ENCODE measurements at regions of chr20 and their contacts with region 1.

Region 1: DNA sequence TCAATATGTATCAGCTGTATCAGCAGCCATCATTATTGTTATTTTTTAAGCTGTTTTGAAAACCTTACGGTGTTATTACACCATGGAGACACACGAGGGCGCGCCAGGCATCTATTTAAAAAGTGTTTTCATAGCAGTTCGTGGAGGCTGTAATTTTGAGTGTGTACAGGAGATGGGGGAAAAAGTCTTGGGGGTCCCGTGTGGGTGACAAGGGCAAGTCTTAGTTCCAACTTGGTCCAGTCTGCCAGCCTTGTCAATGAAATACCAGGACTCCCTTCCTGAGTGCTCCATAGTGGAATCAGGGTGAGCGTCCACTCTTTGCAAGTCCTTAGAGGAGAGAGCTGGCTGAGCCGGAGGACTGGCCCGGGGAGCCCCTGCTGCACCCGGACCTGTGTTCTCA is 43.3 kb downstream of the SLC2A10 start:
- DNase-seq: peak; percentile 80
- H3K4me3 Mint-ChIP-seq: peak overlapping the region; percentile 0
- H3K27ac Mint-ChIP-seq: no peak overlapping the region
- H3K4me1 Mint-ChIP-seq: peaks cover 12% of the 10 kb centered on the region
- H3K27me3 Mint-ChIP-seq: no peaks in the 10 kb centered on the region
- CTCF ChIP-seq: peak; percentile 82

Region 2: DNA sequence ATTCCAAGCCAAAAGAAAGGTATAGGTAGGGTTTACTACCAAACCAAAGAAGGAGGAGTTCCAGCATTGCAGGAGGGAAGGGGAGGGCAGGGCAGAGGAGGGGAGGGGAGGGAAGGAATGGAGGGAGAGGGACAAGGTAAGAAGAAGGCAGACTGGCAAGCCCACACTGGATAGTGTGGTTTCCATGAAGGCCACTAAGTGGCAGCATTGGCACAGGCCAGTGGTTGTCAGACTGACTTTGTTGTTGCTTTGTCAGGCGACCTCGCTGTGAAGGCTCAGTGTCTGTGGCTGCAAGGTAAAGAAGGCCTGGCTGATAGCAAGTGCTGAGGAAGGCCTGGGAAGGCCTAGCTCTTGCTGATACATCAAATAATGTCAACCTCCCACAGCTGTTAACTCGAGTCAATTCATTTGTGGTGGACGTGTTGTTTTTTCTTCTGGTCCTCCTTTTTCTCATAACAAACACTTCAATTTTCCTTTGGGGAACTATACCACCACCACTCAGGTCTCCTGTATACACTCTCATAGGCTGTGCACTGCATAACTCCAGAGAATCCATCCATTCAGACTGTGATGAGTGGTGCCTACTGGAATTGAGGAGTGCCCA is 231.7 kb before region 1 on chr20:
- CTCF ChIA-PET with region 1: no interaction called
- intact Hi-C with region 1: no loop called
- DNase-seq: peak; percentile 79
- H3K4me3 Mint-ChIP-seq: no peak overlapping the region
- H3K27ac Mint-ChIP-seq: no peak overlapping the region
- H3K4me1 Mint-ChIP-seq: no peaks in the 10 kb centered on the region
- H3K27me3 Mint-ChIP-seq: peaks cover 59% of the 10 kb centered on the region
- CTCF ChIP-seq: peak; percentile 86

Region 3: GRCh38 chr20:46739431-46740129 is 13.1 kb before region 1 on chr20:
- CTCF ChIA-PET with region 1: interaction called, 14 read pairs
- intact Hi-C with region 1: no loop called
- DNase-seq: peak; percentile 78
- H3K4me3 Mint-ChIP-seq: peak overlapping the region; percentile 44
- H3K27ac Mint-ChIP-seq: peak overlapping the region; percentile 90
- H3K4me1 Mint-ChIP-seq: peaks cover 59% of the 10 kb centered on the region
- H3K27me3 Mint-ChIP-seq: no peaks in the 10 kb centered on the region
- CTCF ChIP-seq: no peak

Region 4: DNA sequence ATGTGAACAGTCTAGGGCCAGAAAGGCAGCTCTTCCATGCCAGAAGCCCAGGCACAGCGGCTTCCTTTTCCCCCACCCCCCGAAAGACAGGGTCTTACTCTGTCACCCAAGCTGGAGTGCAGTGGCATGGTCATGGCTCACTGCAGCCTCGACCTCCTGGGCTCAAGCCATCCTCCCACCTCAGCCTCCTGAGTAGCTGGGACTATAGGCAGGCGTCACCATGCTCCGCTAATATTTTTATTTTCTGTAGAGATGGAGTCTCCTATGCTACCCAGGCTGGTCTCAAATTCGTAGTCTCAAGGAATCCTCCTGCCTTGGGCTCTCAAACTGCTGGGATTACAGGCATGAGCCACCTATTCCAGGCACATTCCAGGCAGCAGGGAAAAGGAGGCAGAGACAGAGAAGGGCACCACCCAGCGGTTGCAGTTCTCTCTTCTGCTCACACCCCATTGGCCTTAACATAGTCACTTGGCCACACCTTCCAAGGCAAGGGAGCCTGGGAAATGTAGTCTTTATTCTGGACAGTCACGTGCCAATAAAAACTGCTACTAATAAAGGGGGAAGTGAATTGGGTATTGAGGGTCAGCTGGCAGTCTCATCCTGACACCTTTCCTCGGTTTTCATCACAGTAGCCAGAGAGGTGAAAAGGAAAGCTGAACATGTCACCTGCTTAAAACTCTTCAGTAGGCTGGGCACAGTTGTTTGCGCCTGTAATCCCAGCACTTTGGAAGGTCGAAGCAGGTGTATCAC is 397.9 kb after region 1 on chr20:
- CTCF ChIA-PET with region 1: interaction called, 9 read pairs
- intact Hi-C with region 1: loop called (anchors 1 kb)
- DNase-seq: peak; percentile 86
- H3K4me3 Mint-ChIP-seq: no peak overlapping the region
- H3K27ac Mint-ChIP-seq: no peak overlapping the region
- H3K4me1 Mint-ChIP-seq: peaks cover 45% of the 10 kb centered on the region
- H3K27me3 Mint-ChIP-seq: peaks cover 14% of the 10 kb centered on the region
- CTCF ChIP-seq: peak; percentile 61

Region 5: DNA sequence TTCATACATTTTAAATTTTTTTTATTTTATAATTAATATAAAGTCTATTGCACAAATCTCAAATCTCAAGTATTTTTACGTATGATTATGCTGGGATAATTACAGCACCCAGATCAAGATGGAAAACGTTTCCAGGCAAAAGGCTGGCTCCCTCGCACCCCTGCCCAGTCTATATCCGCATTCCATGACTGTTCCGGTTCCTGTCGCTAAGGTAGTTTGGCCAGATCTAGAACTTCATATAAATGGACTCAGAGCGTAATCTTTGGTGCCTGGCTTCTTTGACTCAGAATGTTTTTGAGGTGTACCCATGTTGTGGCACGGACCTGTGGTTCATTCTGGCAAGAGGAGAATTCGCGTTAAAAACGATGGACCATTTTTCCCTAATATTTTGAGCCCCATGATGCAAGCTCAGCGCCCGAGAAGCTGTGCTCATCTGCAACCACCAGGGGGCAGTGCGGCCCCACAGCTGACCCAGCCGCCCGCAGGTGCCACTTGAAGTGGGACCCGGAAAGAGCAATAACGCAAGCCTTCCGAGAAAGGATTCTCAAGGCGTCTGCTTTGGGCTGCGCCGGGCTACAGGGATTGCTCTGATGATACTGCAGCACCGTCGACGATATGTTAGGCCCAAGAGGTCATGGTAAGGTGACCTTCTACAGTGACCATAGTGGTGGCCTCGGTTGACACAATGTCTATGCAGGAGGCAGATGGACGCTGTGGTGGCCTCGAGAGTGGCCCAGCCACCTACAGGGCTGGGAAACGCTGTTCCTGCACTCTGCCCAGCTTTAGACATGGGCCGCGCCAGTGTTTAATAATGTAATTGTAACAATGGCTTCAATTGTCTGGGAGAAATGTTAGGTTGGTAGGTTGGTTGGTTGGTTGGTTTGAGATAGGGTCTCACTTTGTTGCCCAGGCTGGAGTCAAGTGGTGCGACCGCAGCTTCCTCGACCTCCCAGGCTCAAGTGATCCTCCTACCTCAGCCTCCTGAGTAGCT is 443.7 kb after region 1 on chr20:
- CTCF ChIA-PET with region 1: interaction called, 11 read pairs
- intact Hi-C with region 1: loop called (anchors 5 kb)
- DNase-seq: peak; percentile 95
- H3K4me3 Mint-ChIP-seq: peak overlapping the region; percentile 53
- H3K27ac Mint-ChIP-seq: no peak overlapping the region
- H3K4me1 Mint-ChIP-seq: peaks cover 38% of the 10 kb centered on the region
- H3K27me3 Mint-ChIP-seq: no peaks in the 10 kb centered on the region
- CTCF ChIP-seq: peak; percentile 99

Region 6: DNA sequence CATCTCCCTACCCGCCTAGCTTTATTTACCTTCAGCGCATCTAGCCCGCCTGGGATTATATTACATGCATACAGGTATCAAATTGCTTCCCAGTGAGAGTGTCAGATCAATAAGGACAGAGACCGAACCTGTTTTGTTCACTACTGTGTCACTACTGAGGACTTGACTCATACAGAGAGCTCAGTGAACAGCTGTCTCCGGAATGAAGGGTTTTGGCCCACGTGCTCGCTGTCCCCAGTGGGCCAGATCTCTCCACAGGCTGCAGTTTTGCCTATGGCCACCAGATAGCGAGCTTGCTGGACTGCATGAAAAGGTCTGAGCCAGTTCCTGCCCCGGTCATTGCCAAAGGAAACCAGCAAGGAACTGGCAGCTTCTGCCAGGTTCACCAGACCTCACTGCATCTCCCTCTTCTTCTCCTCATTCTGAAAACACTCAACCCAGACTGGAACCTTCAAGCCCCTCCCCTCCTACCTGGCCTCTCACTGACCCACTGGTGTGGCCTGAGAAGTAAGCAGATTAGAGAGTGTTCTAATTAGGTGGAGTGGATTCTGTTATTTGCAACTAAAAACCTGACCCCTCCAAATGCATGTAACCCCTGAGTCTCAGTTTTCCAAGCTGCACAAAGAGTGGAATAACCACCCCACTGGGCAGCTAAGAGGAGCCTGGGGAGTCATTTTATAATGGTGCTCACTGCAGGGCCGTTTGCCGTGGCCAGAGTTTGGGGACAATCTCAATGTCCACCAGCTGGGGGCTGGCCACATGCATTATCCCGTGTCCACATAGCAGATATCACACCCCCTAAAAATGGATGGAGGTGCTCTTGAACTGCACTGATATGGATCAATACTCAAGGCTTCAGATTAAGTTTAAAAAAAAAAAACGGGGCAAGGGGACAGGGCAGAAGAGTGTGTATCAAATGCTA is 453.1 kb after region 1 on chr20:
- CTCF ChIA-PET with region 1: interaction called, 22 read pairs
- intact Hi-C with region 1: no loop called
- DNase-seq: peak; percentile 93
- H3K4me3 Mint-ChIP-seq: peak overlapping the region; percentile 51
- H3K27ac Mint-ChIP-seq: peak overlapping the region; percentile 75
- H3K4me1 Mint-ChIP-seq: peaks cover 61% of the 10 kb centered on the region
- H3K27me3 Mint-ChIP-seq: no peaks in the 10 kb centered on the region
- CTCF ChIP-seq: peak; percentile 99

Region 7: GRCh38 chr20:47735412-47736400 is 983.0 kb after region 1 on chr20:
- CTCF ChIA-PET with region 1: no interaction called
- intact Hi-C with region 1: no loop called
- DNase-seq: no peak
- H3K4me3 Mint-ChIP-seq: no peak overlapping the region
- H3K27ac Mint-ChIP-seq: no peak overlapping the region
- H3K4me1 Mint-ChIP-seq: no peaks in the 10 kb centered on the region
- H3K27me3 Mint-ChIP-seq: no peaks in the 10 kb centered on the region
- CTCF ChIP-seq: no peak

Measured in Calu3 (cell line).